ENCODE measurements at regions of chr14 and their contacts with region 1.

Region 1: GRCh38 chr14:63727774-63728728 is at the start of gene SGPP1:
- DNase-seq: peak; percentile 94
- H3K4me3 ChIP-seq: peak within 1 kb of the TSS; percentile 100
- H3K27ac ChIP-seq: peak within 1 kb of the TSS; percentile 91
- H3K4me1 ChIP-seq: peaks cover 28% of the 10 kb centered on the region
- CTCF ChIP-seq: peak; percentile 62
- total RNA-seq, gene SGPP1: 19.4 and 21.0 TPM in 2 replicates

Region 2: DNA sequence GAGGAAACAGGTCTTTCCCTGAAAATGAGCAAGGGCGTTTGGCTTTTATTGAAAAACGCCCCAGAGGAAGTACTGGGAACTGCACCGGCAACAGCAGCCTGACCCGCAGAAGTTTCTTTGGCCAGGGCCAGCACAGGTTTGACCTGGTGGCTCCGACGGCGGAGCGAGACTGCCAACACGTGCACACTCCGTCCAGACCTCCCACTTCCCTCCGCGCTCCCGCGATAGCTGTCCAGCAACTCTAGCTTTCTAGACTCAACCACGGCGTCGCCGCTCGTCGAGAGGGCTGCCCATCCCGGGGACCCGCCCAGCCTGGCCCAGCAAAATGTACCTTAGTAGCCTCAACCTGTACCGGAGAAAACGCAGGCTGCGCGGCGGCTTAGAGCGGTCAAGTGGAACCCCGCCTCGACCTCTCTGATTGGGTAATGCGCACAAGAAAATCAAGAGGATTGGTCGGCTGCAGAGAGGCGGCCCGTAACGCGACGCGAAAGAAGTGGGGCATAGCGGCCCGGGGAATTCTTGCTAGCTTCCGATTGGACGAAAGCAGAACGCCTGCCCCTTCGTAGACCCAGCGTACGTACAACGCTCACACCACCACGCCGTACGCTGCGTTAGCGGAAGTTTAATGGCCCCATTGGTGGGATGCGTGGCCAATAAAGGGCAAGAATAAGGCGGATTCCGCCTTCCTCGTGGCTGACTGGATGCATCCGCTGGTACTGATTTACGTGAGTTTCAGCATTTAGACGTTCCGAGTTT is 86.4 kb before region 1 on chr14 and contains the start of gene WDR89:
- CTCF ChIA-PET with region 1: no interaction called
- POLR2A ChIA-PET with region 1: interaction called, 17 read pairs
- intact Hi-C with region 1: loop called (anchors 1 kb)
- DNase-seq: peak; percentile 99
- H3K4me3 ChIP-seq: peak within 1 kb of the TSS; percentile 76
- H3K27ac ChIP-seq: peak within 1 kb of the TSS; percentile 89
- H3K4me1 ChIP-seq: peaks cover 30% of the 10 kb centered on the region
- CTCF ChIP-seq: peak; percentile 78
- total RNA-seq, gene WDR89: 14.7 and 15.5 TPM in 2 replicates

Region 3: DNA sequence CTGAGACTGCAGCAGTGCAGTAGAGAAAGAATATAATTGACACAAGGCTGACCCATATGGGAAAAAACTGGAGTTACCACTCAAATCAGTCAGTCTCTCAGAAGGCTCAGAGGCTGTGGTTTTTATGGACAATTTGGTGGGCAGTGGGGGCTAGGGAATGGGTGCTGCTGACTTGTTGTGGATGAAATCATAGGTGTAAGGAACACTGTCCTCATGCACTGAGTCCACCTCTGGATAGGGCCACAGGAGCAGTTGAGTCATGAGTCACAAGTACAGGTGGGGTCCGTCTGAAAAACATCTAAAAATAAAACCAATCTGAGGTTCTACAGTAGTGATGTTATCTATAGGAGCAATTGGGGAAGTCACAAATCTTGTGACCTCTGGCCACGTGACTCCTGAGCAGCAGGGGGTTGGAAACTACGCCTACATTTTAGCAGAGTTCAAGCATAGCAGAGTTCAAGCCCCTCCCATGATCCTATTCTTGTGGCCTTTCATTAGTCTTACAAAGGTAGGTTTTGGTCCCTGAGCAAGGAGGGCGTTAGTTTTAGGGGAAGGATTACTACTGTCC is 17.9 kb after region 1 on chr14:
- CTCF ChIA-PET with region 1: interaction called, 5 read pairs
- POLR2A ChIA-PET with region 1: interaction called, 65 read pairs
- intact Hi-C with region 1: loop called (anchors 1 kb)
- DNase-seq: peak; percentile 80
- H3K4me3 ChIP-seq: peak overlapping the region; percentile 42
- H3K27ac ChIP-seq: peak overlapping the region; percentile 82
- H3K4me1 ChIP-seq: peaks cover 55% of the 10 kb centered on the region
- CTCF ChIP-seq: no peak

Region 4: DNA sequence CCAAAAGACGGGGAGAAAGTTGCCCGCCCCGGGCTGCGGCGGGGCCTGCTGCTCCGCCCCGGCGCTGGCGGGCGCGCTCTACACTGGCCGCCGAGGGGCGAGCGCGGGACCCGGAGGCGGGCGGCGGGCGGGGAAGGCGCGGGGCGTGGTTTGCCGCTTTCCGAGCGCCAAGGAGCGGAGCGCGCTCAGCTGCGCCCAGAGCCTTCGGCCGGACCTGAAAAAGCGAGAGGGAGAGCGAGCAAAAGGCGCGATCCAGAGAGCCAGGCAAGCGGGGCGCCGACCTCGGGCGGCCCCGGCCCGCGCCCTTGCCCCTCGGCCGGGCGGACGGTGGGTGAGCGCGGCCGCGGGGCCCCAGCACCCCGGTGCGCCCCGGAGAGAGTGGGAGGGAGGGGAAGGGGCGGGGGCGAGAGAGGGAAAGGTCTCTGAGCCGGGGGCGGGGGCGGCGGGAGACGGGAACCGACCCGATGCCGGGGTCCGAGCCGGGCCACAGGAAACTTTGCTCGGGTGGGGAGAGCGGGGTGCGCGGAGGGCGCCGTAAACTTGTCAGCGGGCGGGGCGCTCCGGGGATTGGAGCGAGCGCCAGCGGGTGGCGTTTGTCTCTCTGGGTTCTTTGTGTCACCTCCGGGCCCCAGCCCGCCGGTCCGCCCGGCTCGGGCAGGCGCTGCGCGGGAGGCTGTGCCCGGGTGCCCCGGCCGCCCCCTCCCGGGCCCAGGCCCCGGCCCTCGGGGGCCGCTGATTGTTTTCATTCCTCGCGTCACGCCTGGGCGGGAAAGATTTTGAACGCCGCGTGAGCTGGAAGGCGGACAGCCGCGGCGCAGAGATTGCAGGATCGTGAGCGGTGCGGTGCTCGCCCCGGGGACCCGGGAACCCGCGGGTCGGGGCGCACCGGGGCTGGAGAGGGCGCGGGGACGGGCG is 125.0 kb after region 1 on chr14 and contains the start of gene SYNE2:
- CTCF ChIA-PET with region 1: no interaction called
- POLR2A ChIA-PET with region 1: interaction called, 4 read pairs
- intact Hi-C with region 1: loop called (anchors 5 kb)
- DNase-seq: peak; percentile 91
- H3K4me3 ChIP-seq: peak within 1 kb of the TSS; percentile 92
- H3K27ac ChIP-seq: peak within 1 kb of the TSS; percentile 83
- H3K4me1 ChIP-seq: peaks cover 37% of the 10 kb centered on the region
- CTCF ChIP-seq: peak; percentile 56
- total RNA-seq, gene SYNE2: 131 and 150 TPM in 2 replicates

Region 5: GRCh38 chr14:64503478-64504309 is 775.6 kb after region 1 on chr14 and contains the start of gene ZBTB25:
- CTCF ChIA-PET with region 1: no interaction called
- POLR2A ChIA-PET with region 1: no interaction called
- intact Hi-C with region 1: loop called (anchors 10 kb)
- DNase-seq: peak; percentile 92
- H3K4me3 ChIP-seq: peak within 1 kb of the TSS; percentile 87
- H3K27ac ChIP-seq: peak within 1 kb of the TSS; percentile 96
- H3K4me1 ChIP-seq: peaks cover 55% of the 10 kb centered on the region
- CTCF ChIP-seq: no peak
- total RNA-seq, gene ZBTB25: 16.1 and 18.4 TPM in 2 replicates